Activated B cell treated with CpG ODN at 0.5 μM for 24 hours (primary cell): ENCODE measurements at regions of chr9 and their contacts with region 1.

Region 1: GRCh38 chr9:90914868-90915483 is 113.4 kb downstream of the SYK start:
- DNase-seq: peak; percentile 60
- ATAC-seq: peak; percentile 98
- H3K4me3 Mint-ChIP-seq: no peak overlapping the region
- H3K27ac Mint-ChIP-seq: no peak overlapping the region
- H3K4me1 Mint-ChIP-seq: peaks cover 21% of the 10 kb centered on the region
- H3K27me3 Mint-ChIP-seq: no peaks in the 10 kb centered on the region
- CTCF ChIP-seq: no peak

Region 2: DNA sequence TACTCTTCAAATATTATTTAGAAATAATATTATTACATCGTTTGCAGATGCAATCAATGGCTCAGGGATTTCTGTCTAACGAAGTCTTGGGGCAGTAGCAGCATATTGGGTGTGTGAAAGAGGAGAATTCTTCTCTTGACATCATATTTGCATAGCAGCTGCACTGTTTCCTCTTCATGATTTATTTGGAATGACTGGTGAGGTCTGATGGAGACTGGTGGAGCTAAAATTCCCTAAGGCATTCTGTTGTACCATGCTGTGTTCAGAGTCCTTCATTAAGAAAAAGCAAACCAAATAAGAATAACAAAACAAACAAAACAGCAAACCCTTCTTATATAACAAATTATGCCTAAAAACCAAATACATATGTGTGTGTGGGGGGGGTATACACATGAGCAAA is 450.0 kb before region 1 on chr9:
- CTCF ChIA-PET with region 1: no interaction called
- POLR2A ChIA-PET with region 1: no interaction called
- intact Hi-C with region 1: no loop called
- DNase-seq: no peak
- ATAC-seq: no peak
- H3K4me3 Mint-ChIP-seq: no peak overlapping the region
- H3K27ac Mint-ChIP-seq: no peak overlapping the region
- H3K4me1 Mint-ChIP-seq: no peaks in the 10 kb centered on the region
- H3K27me3 Mint-ChIP-seq: peaks cover 9% of the 10 kb centered on the region
- CTCF ChIP-seq: no peak

Region 3: DNA sequence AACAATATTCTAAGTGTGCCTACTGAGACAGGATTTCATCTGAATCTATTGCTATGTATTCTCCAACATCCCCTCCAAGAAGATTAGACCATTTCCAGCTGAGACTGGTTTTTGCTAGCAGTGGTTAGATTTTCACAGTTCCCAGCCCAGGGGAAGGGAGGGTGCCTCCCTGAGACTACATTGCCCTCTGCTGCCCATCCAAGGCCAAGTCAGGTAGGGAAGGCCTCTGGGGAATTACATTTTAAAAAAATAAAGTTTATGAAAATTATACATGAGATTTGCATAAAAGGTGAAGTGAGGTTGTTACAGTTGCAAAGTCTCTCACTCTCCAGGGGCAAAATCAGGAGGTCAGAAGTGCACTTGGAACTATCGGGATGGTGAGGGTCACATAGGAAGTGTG is 141.4 kb before region 1 on chr9:
- CTCF ChIA-PET with region 1: no interaction called
- POLR2A ChIA-PET with region 1: no interaction called
- intact Hi-C with region 1: no loop called
- DNase-seq: no peak
- ATAC-seq: peak; percentile 16
- H3K4me3 Mint-ChIP-seq: peak overlapping the region; percentile 28
- H3K27ac Mint-ChIP-seq: peak overlapping the region; percentile 65
- H3K4me1 Mint-ChIP-seq: peaks cover 65% of the 10 kb centered on the region
- H3K27me3 Mint-ChIP-seq: no peaks in the 10 kb centered on the region
- CTCF ChIP-seq: no peak

Region 4: GRCh38 chr9:90860826-90861225 is 54.1 kb before region 1 on chr9:
- CTCF ChIA-PET with region 1: no interaction called
- POLR2A ChIA-PET with region 1: no interaction called
- intact Hi-C with region 1: no loop called
- DNase-seq: no peak
- ATAC-seq: peak; percentile 89
- H3K4me3 Mint-ChIP-seq: peak overlapping the region; percentile 6
- H3K27ac Mint-ChIP-seq: peak overlapping the region; percentile 82
- H3K4me1 Mint-ChIP-seq: peaks cover 59% of the 10 kb centered on the region
- H3K27me3 Mint-ChIP-seq: no peaks in the 10 kb centered on the region
- CTCF ChIP-seq: no peak

Region 5: DNA sequence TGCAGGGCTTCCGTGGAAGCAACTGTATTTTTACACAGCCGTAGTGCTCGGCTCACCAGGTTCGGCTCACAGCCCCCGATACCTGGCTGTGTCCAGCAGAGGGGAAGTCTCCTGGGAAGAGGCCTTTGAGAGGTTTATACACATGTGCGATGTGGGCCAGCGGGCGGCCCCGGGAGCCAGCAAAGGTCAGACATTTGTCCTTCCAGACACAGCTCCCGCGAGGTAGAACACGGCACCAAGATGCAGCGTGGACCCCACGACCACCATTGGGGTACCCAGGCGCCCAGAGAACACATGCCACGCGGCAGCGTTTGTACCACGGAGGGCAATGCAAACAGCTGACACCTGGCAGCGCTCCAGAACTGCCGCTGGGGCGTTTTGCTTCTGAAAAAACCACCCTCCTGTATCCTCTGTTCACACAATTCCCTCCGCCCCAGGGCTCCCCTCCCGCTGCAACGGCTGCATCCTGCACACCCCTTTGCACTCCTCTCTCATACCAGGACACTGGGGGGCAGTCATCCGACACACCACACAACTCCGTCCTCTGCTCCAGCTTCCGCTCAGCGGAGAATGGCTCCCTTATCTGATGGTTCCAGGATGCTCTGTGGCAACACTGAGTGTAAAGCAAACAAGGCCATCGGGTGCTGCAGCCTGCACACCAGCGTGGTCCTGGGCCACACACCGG is 122.0 kb after region 1 on chr9:
- CTCF ChIA-PET with region 1: interaction called, 3 read pairs
- POLR2A ChIA-PET with region 1: no interaction called
- intact Hi-C with region 1: loop called (anchors 1 kb)
- DNase-seq: no peak
- ATAC-seq: peak; percentile 34
- H3K4me3 Mint-ChIP-seq: peak overlapping the region; percentile 55
- H3K27ac Mint-ChIP-seq: no peak overlapping the region
- H3K4me1 Mint-ChIP-seq: peaks cover 31% of the 10 kb centered on the region
- H3K27me3 Mint-ChIP-seq: peaks cover 12% of the 10 kb centered on the region
- CTCF ChIP-seq: no peak

Region 6: DNA sequence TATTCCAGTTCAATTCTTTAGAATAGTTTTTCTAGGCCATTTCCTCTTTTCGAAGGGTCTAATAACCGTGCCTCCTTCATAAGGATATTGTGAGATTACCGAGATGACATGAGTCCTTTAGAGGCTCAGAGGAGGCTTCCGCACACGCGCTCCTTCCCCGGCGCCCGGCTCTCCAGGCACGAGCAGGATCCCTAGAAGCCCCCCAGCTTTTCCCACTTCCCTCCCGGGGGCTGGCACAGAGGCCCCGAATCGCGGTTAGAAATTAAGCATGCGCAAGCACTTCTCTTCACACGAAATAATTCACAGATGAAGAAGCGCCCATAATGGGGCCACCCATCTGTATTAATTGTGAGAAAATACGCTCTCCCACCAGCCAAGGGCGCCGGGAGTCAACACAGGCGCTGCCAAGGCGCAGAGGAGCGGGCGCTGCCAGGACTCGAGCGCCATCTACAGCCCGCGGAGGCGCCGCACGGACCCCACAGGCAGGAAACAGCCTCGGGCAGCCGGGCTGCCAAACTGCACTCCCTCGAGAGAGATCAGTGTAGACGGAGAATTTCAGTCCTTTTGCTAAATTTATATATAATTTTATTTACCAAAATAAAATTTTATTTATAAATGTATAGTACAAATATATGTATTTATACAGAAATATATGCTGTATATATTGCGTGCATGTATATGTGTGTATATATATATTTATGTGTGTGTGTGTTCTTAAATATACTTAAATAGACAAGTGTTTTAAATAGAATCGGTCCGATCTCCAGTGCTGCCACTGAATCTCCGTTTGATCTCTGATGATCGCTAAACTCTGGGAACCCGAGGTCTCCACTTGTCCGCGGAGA is 766.7 kb after region 1 on chr9:
- CTCF ChIA-PET with region 1: interaction called, 13 read pairs
- POLR2A ChIA-PET with region 1: no interaction called
- intact Hi-C with region 1: loop called (anchors 1 kb)
- DNase-seq: peak; percentile 51
- ATAC-seq: peak; percentile 87
- H3K4me3 Mint-ChIP-seq: peak overlapping the region; percentile 70
- H3K27ac Mint-ChIP-seq: no peak overlapping the region
- H3K4me1 Mint-ChIP-seq: peaks cover 5% of the 10 kb centered on the region
- H3K27me3 Mint-ChIP-seq: peaks cover 27% of the 10 kb centered on the region
- CTCF ChIP-seq: no peak

Region 7: DNA sequence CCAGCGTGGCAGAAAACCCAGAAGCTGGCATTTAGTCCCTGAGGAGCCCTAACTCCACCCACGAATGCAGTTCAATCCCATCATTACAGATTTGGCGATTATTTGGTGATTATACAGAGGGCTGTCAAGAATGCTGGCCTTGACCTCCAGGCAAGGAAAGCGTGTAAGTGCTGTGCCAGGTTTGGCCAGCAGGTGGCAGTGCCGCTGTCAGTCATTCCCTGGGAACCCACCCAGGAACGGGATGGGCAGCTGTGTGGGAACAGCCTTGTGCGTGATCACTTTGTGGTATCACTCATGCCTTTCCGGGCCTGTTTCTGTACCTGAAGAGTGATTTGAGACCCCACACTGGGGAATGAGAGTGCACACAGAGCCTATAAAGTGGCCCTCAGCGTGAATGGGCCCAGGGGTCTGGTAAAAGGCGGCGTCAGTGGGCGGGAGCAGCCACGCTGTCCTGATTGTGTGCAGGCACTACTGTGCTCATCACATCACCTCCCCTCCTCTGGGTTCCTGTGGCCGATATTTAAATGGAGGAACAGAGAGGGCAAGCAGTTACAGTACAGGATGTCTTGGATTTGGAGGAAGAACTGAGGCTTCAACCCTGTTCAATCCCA is 819.5 kb after region 1 on chr9:
- CTCF ChIA-PET with region 1: interaction called, 43 read pairs
- POLR2A ChIA-PET with region 1: no interaction called
- intact Hi-C with region 1: loop called (anchors 2 kb)
- DNase-seq: peak; percentile 58
- ATAC-seq: peak; percentile 57
- H3K4me3 Mint-ChIP-seq: no peak overlapping the region
- H3K27ac Mint-ChIP-seq: no peak overlapping the region
- H3K4me1 Mint-ChIP-seq: no peaks in the 10 kb centered on the region
- H3K27me3 Mint-ChIP-seq: peaks cover 18% of the 10 kb centered on the region
- CTCF ChIP-seq: peak; percentile 98

Region 8: DNA sequence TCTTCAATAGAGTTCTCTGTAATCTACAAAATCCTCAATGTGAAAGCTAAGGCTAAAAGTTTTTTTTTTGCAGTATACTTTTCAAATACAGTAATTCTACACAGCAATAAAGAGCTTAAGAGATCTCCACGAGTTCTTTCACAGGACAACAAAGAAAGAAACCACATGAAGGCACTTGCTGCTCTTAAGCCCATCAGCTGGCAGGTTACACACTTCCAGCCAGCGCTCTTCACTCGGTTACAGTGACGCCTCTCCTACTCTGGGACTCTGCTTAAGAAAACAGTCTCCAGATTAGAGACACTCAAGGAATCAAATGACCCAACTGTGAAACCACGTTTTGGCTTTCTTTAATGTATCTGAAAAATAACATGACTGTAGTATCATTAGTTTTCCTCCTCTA is 950.1 kb after region 1 on chr9:
- CTCF ChIA-PET with region 1: no interaction called
- POLR2A ChIA-PET with region 1: no interaction called
- intact Hi-C with region 1: no loop called
- DNase-seq: no peak
- ATAC-seq: no peak
- H3K4me3 Mint-ChIP-seq: no peak overlapping the region
- H3K27ac Mint-ChIP-seq: no peak overlapping the region
- H3K4me1 Mint-ChIP-seq: no peaks in the 10 kb centered on the region
- H3K27me3 Mint-ChIP-seq: peaks cover 9% of the 10 kb centered on the region
- CTCF ChIP-seq: no peak

Region 9: GRCh38 chr9:92634712-92635605 is 1720.0 kb after region 1 on chr9:
- CTCF ChIA-PET with region 1: no interaction called
- POLR2A ChIA-PET with region 1: no interaction called
- intact Hi-C with region 1: loop called (anchors 10 kb)
- DNase-seq: peak; percentile 41
- ATAC-seq: peak; percentile 81
- H3K4me3 Mint-ChIP-seq: no peak overlapping the region
- H3K27ac Mint-ChIP-seq: no peak overlapping the region
- H3K4me1 Mint-ChIP-seq: no peaks in the 10 kb centered on the region
- H3K27me3 Mint-ChIP-seq: no peaks in the 10 kb centered on the region
- CTCF ChIP-seq: no peak